ENCODE measurements at regions of chr12 and their contacts with region 1.

Region 1: DNA sequence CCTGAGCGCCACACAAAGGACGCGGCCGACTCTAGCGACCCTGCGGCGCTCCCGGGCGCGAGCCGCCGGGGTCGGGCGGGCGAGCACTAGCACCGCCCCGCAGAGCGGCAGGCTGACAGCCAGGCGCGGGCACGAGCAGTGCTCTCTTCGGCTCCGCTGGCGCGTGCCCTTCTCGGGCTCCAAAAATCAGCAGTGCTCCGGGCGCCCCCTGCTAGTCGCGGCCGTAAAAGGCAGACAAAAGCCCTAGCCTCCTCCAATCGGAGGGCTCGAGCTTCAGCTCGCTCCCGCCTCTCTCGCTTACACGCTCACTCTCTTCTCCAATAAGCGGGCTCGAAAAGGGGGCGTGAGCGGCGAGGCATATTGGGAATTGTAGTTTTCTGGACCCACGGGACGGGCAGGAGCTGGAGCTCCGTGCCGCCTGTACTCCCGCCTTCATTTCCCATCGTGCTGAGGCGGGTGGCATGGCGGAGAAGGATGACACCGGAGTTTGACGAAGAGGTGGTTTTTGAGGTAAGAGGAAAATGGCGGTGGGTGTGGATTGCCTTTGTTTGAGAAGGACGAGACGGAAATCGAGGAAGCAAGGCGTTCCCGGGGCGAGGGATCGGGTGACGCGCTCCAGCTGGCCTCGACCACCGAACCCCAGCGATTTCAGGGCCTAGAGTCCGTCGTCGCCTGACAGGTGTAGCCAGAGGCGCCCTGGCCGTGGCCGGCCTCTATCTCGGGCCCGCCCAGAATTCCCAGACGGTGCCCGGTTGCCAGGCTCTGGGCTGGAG is at the starts of genes FGD6 and VEZT:
- DNase-seq: peak; percentile 98 to 100 (median 99)
- ATAC-seq: peak; percentile 92
- H3K4me3 ChIP-seq: peak within 1 kb of the TSS; percentile 74 to 82
- H3K27ac ChIP-seq: peak within 1 kb of the TSS; percentile 95 to 97
- H3K4me1 ChIP-seq: peaks cover 4 to 38% of the 10 kb centered on the region in 2 donors
- H3K27me3 ChIP-seq: no peaks in the 10 kb centered on the region
- CTCF ChIP-seq: peak; percentile 53 to 69
- polyA plus RNA-seq, gene FGD6: 13.8 to 17.5 (median 15.1) TPM
- polyA plus RNA-seq, gene VEZT: 76.6 to 108 (median 92.4) TPM

Region 2: DNA sequence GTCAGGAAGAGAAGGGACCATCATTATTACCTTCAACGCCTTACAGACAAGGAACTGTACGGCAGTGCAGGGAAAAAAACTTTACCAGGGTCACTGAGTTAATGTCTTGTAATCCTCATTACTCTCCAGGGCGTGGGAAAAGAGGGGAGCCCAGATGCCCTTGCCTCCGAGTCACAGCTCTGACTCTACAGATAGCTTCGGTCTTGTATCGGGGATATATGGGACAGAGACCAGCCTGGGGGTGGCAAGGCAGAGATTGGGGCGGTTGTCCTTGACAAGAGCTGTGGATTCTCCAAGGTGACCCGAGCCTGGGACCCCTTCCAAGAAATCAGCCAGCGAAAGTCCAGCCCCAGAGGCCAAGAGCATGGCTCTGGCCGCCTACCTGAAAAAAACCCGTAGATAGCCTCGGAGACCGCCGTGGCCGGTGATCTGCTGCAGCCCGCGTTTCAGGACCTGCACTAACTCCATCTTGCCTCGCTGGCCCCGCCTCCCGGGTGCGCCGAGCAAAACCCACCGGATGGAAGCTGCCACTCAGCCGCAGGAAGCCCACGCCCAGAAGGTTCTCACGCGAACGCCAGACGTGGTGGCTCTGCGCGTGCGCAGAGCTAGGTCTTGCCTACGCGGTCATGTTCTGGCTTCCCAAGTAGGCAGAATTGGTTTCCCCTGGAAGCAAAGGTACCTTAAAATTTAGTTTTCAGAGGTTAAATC is 214.2 kb before region 1 on chr12 and contains the start of gene NDUFA12:
- intact Hi-C with region 1: no loop called
- DNase-seq: peak; percentile 93 to 98 (median 98)
- ATAC-seq: peak; percentile 100
- H3K4me3 ChIP-seq: peak within 1 kb of the TSS; percentile 56 to 58
- H3K27ac ChIP-seq: peak within 1 kb of the TSS; percentile 80 to 84
- H3K4me1 ChIP-seq: peaks cover 12 to 44% of the 10 kb centered on the region in 2 donors
- H3K27me3 ChIP-seq: no peaks in the 10 kb centered on the region
- CTCF ChIP-seq: no peak
- polyA plus RNA-seq, gene NDUFA12: 79.8 to 87.2 (median 80.9) TPM

Region 3: GRCh38 chr12:95130096-95130495 is 87.5 kb before region 1 on chr12:
- intact Hi-C with region 1: loop called in 1 of 2 experiments (anchors 10 kb)
- DNase-seq: no peak
- ATAC-seq: peak; percentile 35
- H3K4me3 ChIP-seq: no peak overlapping the region
- H3K27ac ChIP-seq: peak overlapping the region in 1 of 2 donors; percentile 13
- H3K4me1 ChIP-seq: peaks cover 4 to 28% of the 10 kb centered on the region in 2 donors
- H3K27me3 ChIP-seq: no peaks in the 10 kb centered on the region
- CTCF ChIP-seq: no peak